Naive thymus-derived CD4-positive, alpha-beta T cell (primary cell): ENCODE measurements at regions of chr1 and their contacts with region 1.

Region 1: GRCh38 chr1:111592389-111593361 is 26.9 kb upstream of the RAP1A start:
- DNase-seq: peak; percentile 22 to 86 (median 56)
- ATAC-seq: peak; percentile 91
- H3K4me3 ChIP-seq: peak overlapping the region; percentile 29
- H3K4me3 Mint-ChIP-seq: peak overlapping the region; percentile 52 to 82 (median 78)
- H3K27ac ChIP-seq: peak overlapping the region; percentile 62
- H3K27ac Mint-ChIP-seq: peak overlapping the region; percentile 83 to 95 (median 91)
- H3K4me1 ChIP-seq: peaks cover 55 to 65% of the 10 kb centered on the region in 2 donors
- H3K4me1 Mint-ChIP-seq: peaks cover 46 to 72% (median 62%) of the 10 kb centered on the region in 7 donors
- H3K27me3 ChIP-seq: no peaks in the 10 kb centered on the region
- H3K27me3 Mint-ChIP-seq: peaks cover 0 to 2% (median 0%) of the 10 kb centered on the region in 5 donors

Region 2: GRCh38 chr1:111603979-111604378 is 11.3 kb after region 1 on chr1:
- CTCF ChIA-PET with region 1: interaction called, 6 read pairs
- POLR2A ChIA-PET with region 1: interaction called, 49 read pairs
- intact Hi-C with region 1: loop called (anchors 1 kb)
- DNase-seq: peak; percentile 33 to 88 (median 80)
- ATAC-seq: peak; percentile 99
- H3K4me3 ChIP-seq: no peak overlapping the region
- H3K4me3 Mint-ChIP-seq: peak overlapping the region; percentile 44 to 84 (median 72)
- H3K27ac ChIP-seq: peak overlapping the region; percentile 57
- H3K27ac Mint-ChIP-seq: peak overlapping the region; percentile 83 to 98 (median 89)
- H3K4me1 ChIP-seq: peaks cover 49 to 77% of the 10 kb centered on the region in 2 donors
- H3K4me1 Mint-ChIP-seq: peaks cover 48 to 77% (median 74%) of the 10 kb centered on the region in 7 donors
- H3K27me3 ChIP-seq: no peaks in the 10 kb centered on the region
- H3K27me3 Mint-ChIP-seq: no peaks in the 10 kb centered on the region

Region 3: DNA sequence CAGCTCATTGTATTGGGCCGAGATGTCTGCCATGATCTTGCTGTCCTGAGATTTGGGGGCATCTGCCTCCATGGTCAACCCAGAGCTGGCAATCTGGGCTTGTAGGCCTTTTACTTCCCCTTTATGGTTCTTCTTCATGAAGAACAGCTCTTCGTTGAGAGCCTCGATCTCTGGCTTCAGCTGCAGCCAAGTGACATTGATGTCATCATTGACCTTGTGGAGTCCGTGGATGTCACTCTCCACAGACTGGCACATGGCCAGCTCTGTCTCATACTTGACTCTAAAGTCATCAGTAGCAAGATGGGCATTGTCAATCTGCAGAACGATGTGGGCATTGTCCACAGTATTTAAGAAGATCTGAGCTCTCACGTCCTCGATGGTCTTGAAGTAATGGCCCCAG is 56.1 kb after region 1 on chr1:
- CTCF ChIA-PET with region 1: interaction called, 3 read pairs
- POLR2A ChIA-PET with region 1: interaction called, 6 read pairs
- intact Hi-C with region 1: loop called in 1 of 2 experiments (anchors 2 kb)
- DNase-seq: no peak
- ATAC-seq: no peak
- H3K4me3 ChIP-seq: no peak overlapping the region
- H3K4me3 Mint-ChIP-seq: peak overlapping the region in 8 of 10 donors; percentile 56 to 88 (median 66)
- H3K27ac ChIP-seq: no peak overlapping the region
- H3K27ac Mint-ChIP-seq: peak overlapping the region; percentile 28 to 86 (median 77)
- H3K4me1 ChIP-seq: peaks cover 41 to 52% of the 10 kb centered on the region in 2 donors
- H3K4me1 Mint-ChIP-seq: peaks cover 62 to 96% (median 85%) of the 10 kb centered on the region in 7 donors
- H3K27me3 ChIP-seq: no peaks in the 10 kb centered on the region
- H3K27me3 Mint-ChIP-seq: no peaks in the 10 kb centered on the region

Region 4: GRCh38 chr1:111725192-111725591 is 132.5 kb after region 1 on chr1:
- CTCF ChIA-PET with region 1: no interaction called
- POLR2A ChIA-PET with region 1: no interaction called
- intact Hi-C with region 1: no loop called
- DNase-seq: peak in 1 of 9 donors; percentile 14
- ATAC-seq: no peak
- H3K4me3 ChIP-seq: no peak overlapping the region
- H3K4me3 Mint-ChIP-seq: no peak overlapping the region
- H3K27ac ChIP-seq: no peak overlapping the region
- H3K27ac Mint-ChIP-seq: peak overlapping the region in 2 of 9 donors; percentile 17 to 46
- H3K4me1 ChIP-seq: peaks cover 0 to 8% of the 10 kb centered on the region in 2 donors
- H3K4me1 Mint-ChIP-seq: peaks cover 6 to 29% (median 19%) of the 10 kb centered on the region in 7 donors
- H3K27me3 ChIP-seq: no peaks in the 10 kb centered on the region
- H3K27me3 Mint-ChIP-seq: no peaks in the 10 kb centered on the region